ENCODE measurements at regions of chr17 and their contacts with region 1.

Region 1: DNA sequence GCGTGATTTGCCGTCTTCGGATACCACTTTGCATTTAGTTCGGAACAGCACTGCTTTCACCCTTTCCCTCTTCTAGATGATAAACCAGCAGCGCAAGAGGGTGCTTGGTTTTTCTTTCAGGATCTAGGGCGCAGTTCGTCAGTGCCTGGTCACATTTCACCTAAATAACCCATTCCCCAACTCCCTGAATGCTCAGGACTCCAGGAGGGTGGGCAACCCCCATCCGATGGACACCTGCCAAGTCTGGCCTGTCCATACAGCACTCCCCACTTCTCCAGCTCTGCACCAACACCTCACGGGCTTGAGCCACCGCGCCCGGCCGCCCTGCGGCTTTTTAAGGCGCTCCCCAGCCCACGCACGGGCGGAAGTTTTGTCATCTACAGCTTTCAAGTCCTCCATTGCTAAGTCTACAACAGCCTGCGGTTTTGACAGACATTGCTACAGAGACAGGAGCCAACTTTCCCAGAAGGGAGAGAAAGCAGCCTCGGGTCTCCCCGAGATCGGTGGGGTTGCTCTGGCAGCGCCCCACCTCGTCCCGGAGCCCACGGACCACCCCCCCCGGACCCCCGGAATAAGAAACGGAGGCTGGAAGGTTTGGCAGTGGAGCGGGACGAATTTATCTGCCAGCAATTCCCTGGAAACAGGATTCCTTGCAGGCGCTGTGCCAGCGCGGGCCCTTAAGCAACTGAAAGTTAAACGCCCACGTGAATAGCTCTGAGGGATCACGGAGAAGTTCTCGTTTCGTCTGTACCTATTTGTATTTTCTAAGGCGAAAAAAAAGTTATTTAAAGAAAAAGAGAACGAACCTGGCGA is 38.6 kb upstream of the SLFN13 start:
- DNase-seq: peak; percentile 31 to 90 (median 75)
- ATAC-seq: peak; percentile 67
- H3K4me3 ChIP-seq: peak overlapping the region; percentile 77 to 86
- H3K4me3 Mint-ChIP-seq: peak overlapping the region; percentile 90
- H3K27ac ChIP-seq: peak overlapping the region; percentile 83 to 88
- H3K27ac Mint-ChIP-seq: peak overlapping the region; percentile 98
- H3K4me1 ChIP-seq: peaks cover 28% of the 10 kb centered on the region
- H3K4me1 Mint-ChIP-seq: peaks cover 58% of the 10 kb centered on the region
- H3K27me3 ChIP-seq: no peaks in the 10 kb centered on the region
- H3K27me3 Mint-ChIP-seq: no peaks in the 10 kb centered on the region
- CTCF ChIP-seq: no peak

Region 2: DNA sequence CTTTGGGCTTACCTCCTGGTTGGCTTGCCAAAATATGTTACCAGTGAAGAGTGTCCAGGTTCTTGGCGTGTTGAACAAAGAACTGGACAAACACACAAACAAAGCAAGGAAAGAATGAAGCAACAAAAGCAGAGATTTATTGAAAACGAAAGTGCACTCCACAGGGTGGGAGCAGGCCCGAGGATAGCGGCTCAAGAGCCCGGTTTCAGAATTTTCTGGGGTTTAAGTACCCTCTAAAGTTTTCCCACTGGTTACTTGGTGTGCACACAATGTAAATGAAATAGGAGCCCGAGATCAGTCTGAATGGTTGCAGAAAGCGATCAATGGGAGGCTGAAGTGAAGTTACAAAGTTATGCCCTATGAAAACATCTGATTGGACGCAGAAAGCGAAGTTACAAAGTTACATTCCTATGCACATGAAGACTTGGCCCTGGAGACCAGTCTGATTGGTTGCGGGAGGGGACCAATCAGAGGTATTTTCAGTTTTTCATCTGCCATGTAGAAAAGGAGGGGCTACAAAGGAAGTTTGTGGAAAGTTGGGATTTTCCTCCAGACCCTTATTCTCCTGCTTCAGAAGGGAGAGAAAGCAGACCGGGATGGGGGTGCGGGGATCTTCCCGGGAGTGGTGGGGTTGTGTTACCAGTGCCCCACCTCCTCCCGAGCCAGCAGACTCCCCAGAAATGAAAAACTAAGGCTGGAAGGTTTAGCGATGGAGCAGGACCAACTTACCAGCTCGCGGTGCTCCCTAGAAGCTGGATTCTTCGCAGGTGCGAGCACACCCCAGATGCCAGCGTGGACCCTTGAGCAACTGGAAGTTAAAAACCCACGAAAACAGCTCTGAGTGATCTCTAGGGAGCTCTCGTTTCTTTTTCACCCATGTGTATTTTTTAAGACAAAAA is 54.7 kb before region 1 on chr17 and contains the start of gene SLFN12:
- CTCF ChIA-PET with region 1: interaction called, 3 read pairs
- POLR2A ChIA-PET with region 1: interaction called, 7 read pairs
- intact Hi-C with region 1: loop called (anchors 2 to 5 kb)
- DNase-seq: peak in 8 of 9 experiments; percentile 8 to 87 (median 50)
- ATAC-seq: peak; percentile 86
- H3K4me3 ChIP-seq: peak within 1 kb of the TSS; percentile 59 to 91
- H3K4me3 Mint-ChIP-seq: peak within 1 kb of the TSS; percentile 91
- H3K27ac ChIP-seq: peak within 1 kb of the TSS; percentile 42
- H3K27ac Mint-ChIP-seq: peak within 1 kb of the TSS; percentile 90
- H3K4me1 ChIP-seq: peaks cover 37% of the 10 kb centered on the region
- H3K4me1 Mint-ChIP-seq: peaks cover 46% of the 10 kb centered on the region
- H3K27me3 ChIP-seq: no peaks in the 10 kb centered on the region
- H3K27me3 Mint-ChIP-seq: no peaks in the 10 kb centered on the region
- CTCF ChIP-seq: no peak
- total RNA-seq, gene SLFN12: 2.4 TPM

Region 3: DNA sequence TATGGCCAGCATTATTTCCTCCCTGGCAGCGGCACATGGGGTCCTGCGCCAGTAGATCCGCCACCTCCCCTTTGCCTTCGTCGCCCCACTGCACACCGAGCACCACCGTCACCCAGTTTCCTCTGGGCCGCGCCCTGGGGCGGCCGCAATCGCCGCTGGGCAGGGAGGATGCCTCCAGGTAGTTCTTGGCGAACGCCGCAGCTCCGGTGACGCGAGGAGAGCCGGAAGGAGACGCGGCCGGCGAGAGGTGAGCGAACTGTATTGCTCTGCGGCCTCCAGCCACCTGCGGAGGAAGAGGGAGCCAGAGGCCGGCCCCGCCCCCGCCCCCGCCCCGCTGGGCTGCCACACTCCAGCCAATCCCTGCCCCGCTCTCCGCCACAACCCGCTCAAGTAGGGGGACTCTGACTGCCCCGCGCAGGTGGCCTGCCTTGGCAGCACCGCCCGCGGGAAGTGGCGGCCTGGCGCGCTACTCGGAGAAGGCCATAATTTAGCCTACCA is 26.7 kb before region 1 on chr17:
- CTCF ChIA-PET with region 1: interaction called, 3 read pairs
- POLR2A ChIA-PET with region 1: interaction called, 3 read pairs
- intact Hi-C with region 1: loop called in 1 of 2 experiments (anchors 1 kb)
- DNase-seq: peak; percentile 40 to 89 (median 75)
- ATAC-seq: peak; percentile 92
- H3K4me3 ChIP-seq: peak overlapping the region; percentile 27 to 33
- H3K4me3 Mint-ChIP-seq: peak overlapping the region; percentile 77
- H3K27ac ChIP-seq: peak overlapping the region; percentile 42 to 64
- H3K27ac Mint-ChIP-seq: peak overlapping the region; percentile 93
- H3K4me1 ChIP-seq: peaks cover 17% of the 10 kb centered on the region
- H3K4me1 Mint-ChIP-seq: peaks cover 22% of the 10 kb centered on the region
- H3K27me3 ChIP-seq: no peaks in the 10 kb centered on the region
- H3K27me3 Mint-ChIP-seq: no peaks in the 10 kb centered on the region
- CTCF ChIP-seq: no peak

Region 4: GRCh38 chr17:35519439-35519838 is 32.3 kb after region 1 on chr17:
- CTCF ChIA-PET with region 1: interaction called, 9 read pairs
- POLR2A ChIA-PET with region 1: interaction called, 12 read pairs
- intact Hi-C with region 1: loop called in 1 of 2 experiments (anchors 2 kb)
- DNase-seq: peak in 2 of 9 experiments; percentile 51 to 71
- ATAC-seq: peak; percentile 32
- H3K4me3 ChIP-seq: no peak overlapping the region
- H3K4me3 Mint-ChIP-seq: peak overlapping the region; percentile 64
- H3K27ac ChIP-seq: peak overlapping the region in 1 of 2 experiments; percentile 77
- H3K27ac Mint-ChIP-seq: peak overlapping the region; percentile 86
- H3K4me1 ChIP-seq: peaks cover 67% of the 10 kb centered on the region
- H3K4me1 Mint-ChIP-seq: peaks cover 93% of the 10 kb centered on the region
- H3K27me3 ChIP-seq: no peaks in the 10 kb centered on the region
- H3K27me3 Mint-ChIP-seq: no peaks in the 10 kb centered on the region
- CTCF ChIP-seq: no peak

Region 5: DNA sequence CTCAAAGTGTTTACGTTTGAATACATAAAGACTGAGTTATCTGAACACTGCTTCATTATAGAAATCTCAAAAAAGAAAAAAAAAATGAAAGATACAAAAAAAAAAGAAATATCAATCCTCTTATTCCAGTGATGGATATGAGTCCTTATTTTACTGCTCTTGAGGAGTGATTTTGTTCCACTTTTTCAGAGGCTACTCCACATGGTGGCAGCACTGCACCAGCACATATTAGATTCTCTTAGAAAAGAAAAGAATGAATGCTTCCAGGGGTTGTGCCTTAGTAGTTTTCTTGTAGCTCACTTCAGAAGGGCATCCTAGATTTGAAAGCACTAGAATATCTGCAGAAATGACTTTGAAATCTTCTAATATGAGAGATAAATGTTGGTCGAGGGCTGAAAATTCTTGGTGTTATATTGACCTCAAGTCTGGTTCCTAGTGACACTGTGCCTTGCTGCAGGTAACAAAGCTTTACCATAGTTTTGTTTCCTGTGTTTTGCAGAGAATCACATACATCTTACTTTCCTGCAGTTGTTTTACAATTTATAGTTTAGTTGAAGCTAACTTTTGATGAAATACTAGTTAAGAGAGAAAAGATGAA is 125.9 kb after region 1 on chr17:
- CTCF ChIA-PET with region 1: no interaction called
- POLR2A ChIA-PET with region 1: no interaction called
- intact Hi-C with region 1: no loop called
- DNase-seq: peak in 5 of 9 experiments; percentile 28 to 49 (median 34)
- ATAC-seq: peak; percentile 38
- H3K4me3 ChIP-seq: no peak overlapping the region
- H3K4me3 Mint-ChIP-seq: no peak overlapping the region
- H3K27ac ChIP-seq: no peak overlapping the region
- H3K27ac Mint-ChIP-seq: no peak overlapping the region
- H3K4me1 ChIP-seq: no peaks in the 10 kb centered on the region
- H3K4me1 Mint-ChIP-seq: peaks cover 5% of the 10 kb centered on the region
- H3K27me3 ChIP-seq: no peaks in the 10 kb centered on the region
- H3K27me3 Mint-ChIP-seq: no peaks in the 10 kb centered on the region
- CTCF ChIP-seq: peak; percentile 55